ENCODE measurements at regions of chr15 and their contacts with region 1.

Region 1: GRCh38 chr15:72009222-72009621 is 108.7 kb downstream of the MYO9A start:
- DNase-seq: no peak
- ATAC-seq: no peak
- H3K4me3 ChIP-seq: no peak overlapping the region
- H3K27ac ChIP-seq: no peak overlapping the region
- H3K4me1 ChIP-seq: no peaks in the 10 kb centered on the region
- H3K27me3 ChIP-seq: no peaks in the 10 kb centered on the region
- CTCF ChIP-seq: no peak

Region 2: GRCh38 chr15:71136159-71136783 is 873.0 kb before region 1 on chr15:
- intact Hi-C with region 1: loop called in 1 of 10 experiments (anchors 5 kb)
- DNase-seq: no peak
- ATAC-seq: peak; percentile 23 to 80 (median 74)
- H3K4me3 ChIP-seq: no peak overlapping the region
- H3K27ac ChIP-seq: peak overlapping the region in 9 of 10 donors; percentile 14 to 81 (median 52)
- H3K4me1 ChIP-seq: peaks cover 7 to 83% (median 32%) of the 10 kb centered on the region in 9 donors
- H3K27me3 ChIP-seq: no peaks in the 10 kb centered on the region
- CTCF ChIP-seq: no peak

Region 3: GRCh38 chr15:71511796-71512681 is 497.2 kb before region 1 on chr15:
- intact Hi-C with region 1: no loop called
- DNase-seq: no peak
- ATAC-seq: no peak
- H3K4me3 ChIP-seq: no peak overlapping the region
- H3K27ac ChIP-seq: no peak overlapping the region
- H3K4me1 ChIP-seq: peaks cover 0 to 28% (median 5%) of the 10 kb centered on the region in 9 donors
- H3K27me3 ChIP-seq: no peaks in the 10 kb centered on the region
- CTCF ChIP-seq: no peak

Region 4: DNA sequence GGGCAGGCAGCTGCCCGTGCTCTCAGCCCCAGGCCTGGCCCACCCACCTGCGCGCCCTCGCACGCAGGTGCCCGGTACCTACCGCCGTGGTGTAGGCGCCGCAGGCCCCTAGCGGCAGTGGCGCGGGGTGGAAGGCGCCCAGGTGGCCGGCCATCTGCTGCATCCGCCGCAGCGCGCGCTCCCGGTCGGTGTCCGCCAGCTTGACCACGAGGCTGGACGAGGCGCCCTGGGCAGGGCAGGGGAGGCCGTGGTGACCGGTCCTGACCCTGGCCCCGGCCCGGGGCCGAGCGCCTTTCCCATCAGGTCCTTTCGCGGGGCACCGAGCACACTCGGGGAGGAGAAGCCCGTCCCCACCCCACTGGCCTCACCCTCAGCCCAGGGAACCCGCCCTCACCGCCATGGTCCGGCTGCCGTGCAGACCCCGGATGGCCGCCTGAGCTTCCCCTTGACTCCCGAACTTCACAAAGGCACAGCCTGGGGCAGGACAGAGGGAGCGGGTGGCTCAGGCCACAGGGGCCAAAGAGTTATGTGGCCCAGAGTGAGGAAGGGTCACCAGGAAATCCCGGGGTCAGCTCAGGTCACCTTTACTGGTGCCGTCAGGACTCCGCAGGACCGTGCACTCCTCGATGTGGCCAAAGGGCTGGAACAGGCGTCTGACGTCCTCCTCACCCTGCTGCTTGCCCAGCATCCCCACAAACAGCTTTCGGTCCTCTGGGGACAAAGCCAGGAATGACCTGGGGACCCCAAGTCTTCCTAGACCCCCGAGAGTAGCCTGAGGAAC is 280.5 kb after region 1 on chr15:
- intact Hi-C with region 1: no loop called
- DNase-seq: no peak
- ATAC-seq: no peak
- H3K4me3 ChIP-seq: no peak overlapping the region
- H3K27ac ChIP-seq: no peak overlapping the region
- H3K4me1 ChIP-seq: no peaks in the 10 kb centered on the region
- H3K27me3 ChIP-seq: no peaks in the 10 kb centered on the region
- CTCF ChIP-seq: no peak